ENCODE measurements at regions of chr2 and their contacts with region 1.

Region 1: DNA sequence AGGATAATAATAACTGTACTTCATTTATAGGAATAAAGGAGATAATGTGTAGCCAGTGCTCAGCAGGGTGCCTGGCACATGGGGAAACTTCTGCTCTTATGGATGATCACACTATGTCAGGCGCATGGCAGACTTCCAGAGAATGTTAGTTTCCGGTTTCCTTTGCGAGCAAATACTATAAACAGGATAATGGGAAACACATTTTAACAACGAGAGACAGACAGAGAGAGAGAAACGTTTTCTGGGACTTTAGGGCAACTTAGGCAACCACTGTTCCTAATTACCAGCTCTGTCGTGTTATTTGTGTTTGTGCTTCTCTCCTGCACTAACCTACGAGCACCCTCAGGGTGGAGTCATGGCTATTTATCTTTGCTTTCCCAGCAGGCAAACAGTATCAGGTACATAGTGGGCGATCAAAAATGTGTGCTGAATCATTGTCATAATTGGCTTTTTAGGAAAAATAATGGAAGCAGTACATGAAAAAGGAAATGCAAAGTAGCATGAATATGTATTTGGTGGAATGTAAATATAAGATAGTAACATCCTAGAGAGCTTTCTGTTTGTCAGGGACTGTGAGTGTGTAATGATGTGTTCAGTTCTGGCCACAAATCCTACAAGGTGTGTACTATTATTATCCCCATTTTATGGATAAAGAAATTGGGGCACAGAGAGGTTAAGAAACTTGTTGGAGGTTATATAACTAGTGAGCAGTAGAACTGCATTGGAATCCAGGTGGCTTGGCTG is 36.8 kb upstream of the IGFBP2 start:
- DNase-seq: peak in 1 of 2 donors; percentile 46
- ATAC-seq: peak in 6 of 8 donors; percentile 36 to 66 (median 57)
- H3K4me3 ChIP-seq: peak overlapping the region in 1 of 10 donors; percentile 6
- H3K27ac ChIP-seq: peak overlapping the region in 1 of 10 donors; percentile 42
- H3K4me1 ChIP-seq: peaks cover 0 to 28% (median 23%) of the 10 kb centered on the region in 9 donors
- H3K27me3 ChIP-seq: no peaks in the 10 kb centered on the region
- CTCF ChIP-seq: no peak

Region 2: GRCh38 chr2:216546641-216547403 is 49.6 kb before region 1 on chr2:
- intact Hi-C with region 1: loop called in 1 of 10 experiments (anchors 5 kb)
- DNase-seq: peak in 1 of 2 donors; percentile 43
- ATAC-seq: peak; percentile 61 to 90 (median 82)
- H3K4me3 ChIP-seq: no peak overlapping the region
- H3K27ac ChIP-seq: peak overlapping the region; percentile 65 to 94 (median 80)
- H3K4me1 ChIP-seq: peaks cover 0 to 61% (median 31%) of the 10 kb centered on the region in 9 donors
- H3K27me3 ChIP-seq: no peaks in the 10 kb centered on the region
- CTCF ChIP-seq: no peak